ENCODE measurements at regions of chr3 and their contacts with region 1.

Region 1: GRCh38 chr3:177359593-177360357 is 162.5 kb upstream of the TBL1XR1 start:
- DNase-seq: peak; percentile 98
- H3K4me3 ChIP-seq: peak overlapping the region; percentile 39
- H3K27ac ChIP-seq: peak overlapping the region; percentile 31
- H3K27me3 ChIP-seq: no peaks in the 10 kb centered on the region
- CTCF ChIP-seq: 0 out of 2 replicates have a peak, but pooled peaks have one; percentile 13

Region 2: DNA sequence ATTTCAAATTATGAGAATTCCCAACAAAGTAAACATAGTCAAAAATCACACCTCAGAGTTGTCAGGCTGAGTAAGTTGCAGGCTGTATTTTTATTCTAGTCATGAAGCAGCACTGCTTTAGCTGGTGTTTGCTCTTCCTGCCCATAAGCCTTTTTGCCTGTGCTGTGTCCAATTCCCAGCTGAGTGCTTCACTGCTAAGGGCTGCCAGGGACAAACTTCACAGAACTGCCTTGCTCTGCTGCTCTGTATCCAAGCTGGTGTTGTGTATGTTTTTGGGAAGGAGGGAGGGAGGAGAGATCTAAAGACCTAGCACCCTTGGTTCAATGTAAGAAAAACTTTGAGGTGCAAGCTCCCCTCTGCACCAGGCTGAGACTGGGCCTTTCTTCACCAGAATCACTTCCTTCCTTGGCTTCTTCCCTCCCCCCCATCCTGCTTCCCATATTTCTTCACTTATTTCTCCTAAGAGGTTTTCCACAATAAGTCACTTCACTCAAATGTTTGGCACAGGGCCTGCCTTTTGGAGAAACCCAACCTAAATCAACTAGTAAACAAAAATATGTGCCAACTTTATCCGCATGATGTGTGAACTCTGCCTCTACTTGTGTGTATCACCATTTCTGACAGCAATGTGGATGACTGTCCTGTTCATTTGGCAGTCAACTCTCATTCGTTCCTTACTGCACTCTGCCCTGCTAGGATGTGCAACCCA is 318.6 kb before region 1 on chr3:
- CTCF ChIA-PET with region 1: no interaction called
- POLR2A ChIA-PET with region 1: no interaction called
- DNase-seq: no peak
- H3K4me3 ChIP-seq: no peak overlapping the region
- H3K27ac ChIP-seq: no peak overlapping the region
- H3K27me3 ChIP-seq: no peaks in the 10 kb centered on the region
- CTCF ChIP-seq: no peak

Region 3: GRCh38 chr3:177197041-177197727 is 162.6 kb before region 1 on chr3 and contains the start of gene TBL1XR1:
- CTCF ChIA-PET with region 1: interaction called, 6 read pairs
- POLR2A ChIA-PET with region 1: interaction called, 32 read pairs
- DNase-seq: peak; percentile 83
- H3K4me3 ChIP-seq: peak within 1 kb of the TSS; percentile 92
- H3K27ac ChIP-seq: peak within 1 kb of the TSS; percentile 92
- H3K27me3 ChIP-seq: no peaks in the 10 kb centered on the region
- CTCF ChIP-seq: no peak
- polyA plus RNA-seq, gene TBL1XR1: 199 and 207 TPM in 2 replicates

Region 4: DNA sequence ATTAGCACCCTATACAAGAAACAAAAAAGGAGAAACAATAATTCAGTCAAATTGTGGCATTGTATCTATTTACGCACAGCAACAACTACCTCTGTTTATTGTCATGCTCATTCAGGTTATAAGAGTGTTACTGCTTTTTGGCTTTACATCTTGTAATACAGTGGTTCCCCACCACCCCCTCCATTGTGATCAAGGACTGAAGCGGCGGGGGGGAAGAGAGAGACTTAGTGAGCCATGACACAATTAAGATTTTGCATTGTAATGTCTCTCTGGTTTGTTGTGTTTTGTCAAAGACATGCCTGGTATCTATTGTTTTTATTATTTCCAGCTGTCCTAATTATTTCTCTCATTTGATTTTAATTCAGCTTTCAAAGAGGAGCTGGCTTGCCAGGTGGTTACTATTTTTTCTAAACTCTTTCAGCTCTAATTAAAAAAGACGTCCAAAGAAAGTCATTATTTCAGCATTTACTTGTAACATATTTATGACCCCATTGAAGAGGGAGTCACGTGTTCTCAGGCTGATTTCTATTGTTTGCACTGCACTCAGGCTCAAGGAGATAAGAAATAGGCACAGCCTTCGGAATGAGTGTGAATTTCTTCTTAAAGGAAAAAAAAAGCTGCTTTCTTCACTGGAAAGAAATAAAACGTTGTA is 71.9 kb after region 1 on chr3:
- CTCF ChIA-PET with region 1: no interaction called
- POLR2A ChIA-PET with region 1: interaction called, 10 read pairs
- DNase-seq: no peak
- H3K4me3 ChIP-seq: no peak overlapping the region
- H3K27ac ChIP-seq: no peak overlapping the region
- H3K27me3 ChIP-seq: no peaks in the 10 kb centered on the region
- CTCF ChIP-seq: no peak

Region 5: GRCh38 chr3:177652556-177653291 is 292.9 kb after region 1 on chr3:
- CTCF ChIA-PET with region 1: no interaction called
- POLR2A ChIA-PET with region 1: no interaction called
- DNase-seq: no peak
- H3K4me3 ChIP-seq: no peak overlapping the region
- H3K27ac ChIP-seq: no peak overlapping the region
- H3K27me3 ChIP-seq: no peaks in the 10 kb centered on the region
- CTCF ChIP-seq: no peak

Region 6: DNA sequence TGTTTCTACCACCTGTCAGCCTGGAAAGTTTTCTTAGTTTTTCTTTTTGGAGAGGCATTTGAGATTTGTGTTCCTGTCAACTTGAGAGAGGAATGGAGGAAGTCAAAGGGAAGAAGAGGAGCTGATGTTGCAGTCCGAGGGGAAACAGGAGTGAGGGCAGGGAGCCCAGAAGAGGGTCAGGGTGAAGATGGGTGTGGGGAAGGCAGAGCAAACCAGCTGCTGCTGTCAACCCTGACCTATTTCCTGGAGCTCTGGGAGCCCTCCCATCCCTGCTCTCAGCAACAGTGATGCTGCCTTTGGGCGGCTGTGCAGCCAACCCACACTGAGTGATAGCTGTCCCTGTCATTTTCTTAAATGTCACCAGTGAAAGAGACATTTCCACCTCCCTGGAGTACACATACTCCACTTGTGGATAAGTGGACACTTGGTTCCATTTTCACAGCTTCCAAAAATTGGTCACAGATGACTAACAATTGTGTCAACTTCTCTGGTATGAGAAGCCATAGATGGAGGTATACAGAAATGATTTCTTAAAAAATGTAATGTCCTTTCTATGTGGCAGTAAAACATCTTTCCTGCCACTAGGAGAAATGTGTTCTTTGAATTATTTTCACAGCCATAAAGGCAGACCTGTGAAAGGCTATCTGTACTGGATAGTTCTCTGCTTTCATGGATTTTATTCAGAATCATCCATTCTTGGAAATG is 393.8 kb after region 1 on chr3:
- CTCF ChIA-PET with region 1: no interaction called
- POLR2A ChIA-PET with region 1: no interaction called
- DNase-seq: no peak
- H3K4me3 ChIP-seq: no peak overlapping the region
- H3K27ac ChIP-seq: no peak overlapping the region
- H3K27me3 ChIP-seq: no peaks in the 10 kb centered on the region
- CTCF ChIP-seq: no peak

Measured in AG04450 (cell line).